Breast epithelium (tissue), 4 donors: ENCODE measurements at regions of chr3 and their contacts with region 1.

Region 1: GRCh38 chr3:98630416-98630815 is 37.0 kb upstream of the CPOX start:
- DNase-seq: no peak
- H3K4me3 ChIP-seq: no peak overlapping the region
- H3K27ac ChIP-seq: no peak overlapping the region
- H3K4me1 ChIP-seq: no peaks in the 10 kb centered on the region
- H3K27me3 ChIP-seq: no peaks in the 10 kb centered on the region
- CTCF ChIP-seq: no peak
- POLR2A ChIP-seq: no peak

Region 2: GRCh38 chr3:98699136-98699535 is 68.7 kb after region 1 on chr3:
- intact Hi-C with region 1: loop called (anchors 2 kb)
- DNase-seq: peak in 1 of 2 donors; percentile 70
- H3K4me3 ChIP-seq: no peak overlapping the region
- H3K27ac ChIP-seq: no peak overlapping the region
- H3K4me1 ChIP-seq: no peaks in the 10 kb centered on the region
- H3K27me3 ChIP-seq: no peaks in the 10 kb centered on the region
- CTCF ChIP-seq: no peak
- POLR2A ChIP-seq: no peak

Region 3: DNA sequence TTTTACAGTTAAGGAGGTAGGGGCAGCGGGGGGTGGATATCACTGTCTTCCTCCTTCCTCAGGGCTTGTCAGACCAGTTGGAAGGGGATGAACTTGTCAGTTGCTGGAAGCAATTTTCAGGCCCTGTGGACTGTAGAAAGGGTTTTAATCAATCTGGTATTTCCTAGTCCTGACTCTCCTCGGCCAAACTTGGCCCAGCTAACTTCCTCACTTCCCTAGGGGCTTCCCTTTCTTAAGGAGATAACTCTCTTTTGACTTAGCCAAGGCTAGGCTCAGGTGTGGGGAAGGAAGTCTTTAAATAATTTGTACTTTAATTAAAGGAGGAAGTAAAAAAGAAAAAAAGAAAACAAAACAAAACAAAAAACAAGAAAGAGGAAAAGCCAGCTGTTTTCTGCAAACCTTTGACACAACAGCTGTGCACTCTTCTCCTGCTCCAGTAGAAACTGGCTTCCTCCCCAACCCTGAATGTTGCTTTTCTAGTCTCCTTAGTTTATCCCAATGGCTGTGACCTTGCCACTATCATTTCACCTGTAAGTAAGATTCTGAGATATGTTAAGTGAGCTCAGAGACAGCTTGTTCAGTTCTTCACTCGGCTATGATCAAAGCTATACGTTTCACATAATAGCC is 79.7 kb after region 1 on chr3:
- intact Hi-C with region 1: no loop called
- DNase-seq: no peak
- H3K4me3 ChIP-seq: no peak overlapping the region
- H3K27ac ChIP-seq: no peak overlapping the region
- H3K4me1 ChIP-seq: no peaks in the 10 kb centered on the region
- H3K27me3 ChIP-seq: no peaks in the 10 kb centered on the region
- CTCF ChIP-seq: no peak
- POLR2A ChIP-seq: no peak